Transverse colon (tissue), 4 donors: ENCODE measurements at regions of chrX and their contacts with region 1.

Region 1: DNA sequence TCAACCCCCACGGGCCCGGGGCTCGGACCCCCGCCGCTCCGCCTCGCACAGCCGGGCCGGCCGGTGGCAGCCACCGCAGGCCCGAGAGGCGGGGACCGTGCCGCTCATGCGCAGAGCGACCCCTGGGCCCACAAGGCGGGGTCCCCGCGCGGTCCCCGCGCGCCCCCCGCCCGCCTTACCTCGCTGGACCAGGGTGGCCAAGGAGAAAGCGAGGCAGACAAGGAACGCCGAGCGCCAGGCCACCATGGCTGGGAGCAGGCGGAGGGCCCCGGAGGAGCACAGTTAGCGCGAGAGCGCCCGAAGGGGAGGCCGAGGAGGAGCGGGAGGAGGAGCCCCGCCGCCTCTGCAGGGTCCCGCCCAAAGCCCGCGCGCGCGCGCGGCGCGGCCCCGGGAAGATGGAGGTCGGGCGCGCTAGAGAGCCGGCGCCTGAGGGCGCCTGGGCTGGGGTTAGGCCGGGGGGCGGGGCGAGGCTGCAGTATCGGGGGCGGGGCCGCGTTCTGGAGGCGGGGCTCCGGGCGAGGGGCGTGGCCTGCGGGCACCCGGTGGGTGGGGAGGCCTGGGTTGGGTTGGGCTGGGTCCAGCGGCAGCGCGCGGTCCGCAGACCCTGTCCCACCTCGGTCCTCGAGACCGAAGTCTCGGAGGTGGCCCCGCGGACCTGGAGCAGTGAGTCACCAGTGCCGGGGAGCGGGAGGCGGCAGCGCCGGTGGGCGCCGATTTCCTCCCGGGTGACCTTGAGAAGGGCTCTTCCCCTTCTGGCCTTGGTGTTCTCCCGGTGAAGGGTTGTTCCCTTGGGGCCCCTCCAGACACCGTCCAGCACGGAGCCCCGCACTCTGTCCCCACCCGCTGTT is at the start of gene CD99L2:
- DNase-seq: peak; percentile 93
- H3K4me3 ChIP-seq: peak within 1 kb of the TSS; percentile 53 to 77 (median 65)
- H3K27ac ChIP-seq: peak within 1 kb of the TSS; percentile 77 to 89 (median 84)
- H3K4me1 ChIP-seq: no peaks in the 10 kb centered on the region
- H3K27me3 ChIP-seq: no peaks in the 10 kb centered on the region
- CTCF ChIP-seq: no peak
- EP300 ChIP-seq: no peak
- POLR2A ChIP-seq: peak; percentile 67
- total RNA-seq, gene CD99L2: 12.3 to 22.4 (median 16.5) TPM

Region 2: GRCh38 chrX:150863191-150863590 is 35.4 kb before region 1 on chrX:
- in situ Hi-C with region 1: no loop called
- intact Hi-C with region 1: no loop called
- DNase-seq: no peak
- H3K4me3 ChIP-seq: no peak overlapping the region
- H3K27ac ChIP-seq: no peak overlapping the region
- H3K4me1 ChIP-seq: no peaks in the 10 kb centered on the region
- H3K27me3 ChIP-seq: no peaks in the 10 kb centered on the region
- CTCF ChIP-seq: no peak
- EP300 ChIP-seq: no peak
- POLR2A ChIP-seq: no peak

Region 3: GRCh38 chrX:150873616-150874015 is 25.0 kb before region 1 on chrX:
- in situ Hi-C with region 1: no loop called
- intact Hi-C with region 1: loop called (anchors 2 kb)
- DNase-seq: no peak
- H3K4me3 ChIP-seq: no peak overlapping the region
- H3K27ac ChIP-seq: no peak overlapping the region
- H3K4me1 ChIP-seq: peaks cover 0 to 6% (median 3%) of the 10 kb centered on the region in 4 donors
- H3K27me3 ChIP-seq: no peaks in the 10 kb centered on the region
- CTCF ChIP-seq: no peak
- EP300 ChIP-seq: no peak
- POLR2A ChIP-seq: no peak

Region 4: DNA sequence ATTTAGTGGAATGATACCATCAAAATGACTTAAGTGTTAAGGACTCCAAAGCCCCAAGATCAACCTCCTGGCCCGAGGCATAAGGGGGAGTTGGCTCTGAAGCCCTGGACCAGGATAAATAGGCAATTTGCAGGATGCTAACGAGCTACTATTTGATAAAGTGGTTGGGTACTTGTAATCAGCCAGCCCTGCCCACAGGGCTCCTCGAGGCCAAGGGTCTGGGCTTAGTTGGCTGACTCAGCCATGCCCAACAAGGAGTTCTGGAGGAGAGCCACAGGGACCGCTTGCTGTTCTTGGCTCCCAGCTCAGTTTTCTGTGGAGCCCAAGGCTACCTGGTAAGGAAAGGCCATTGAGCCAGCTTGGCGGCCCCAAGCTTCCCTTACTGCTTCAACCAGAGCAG is 92.3 kb after region 1 on chrX:
- in situ Hi-C with region 1: loop called in 1 of 4 experiments (anchors 5 kb)
- intact Hi-C with region 1: no loop called
- DNase-seq: no peak
- H3K4me3 ChIP-seq: no peak overlapping the region
- H3K27ac ChIP-seq: no peak overlapping the region
- H3K4me1 ChIP-seq: no peaks in the 10 kb centered on the region
- H3K27me3 ChIP-seq: no peaks in the 10 kb centered on the region
- CTCF ChIP-seq: no peak
- EP300 ChIP-seq: no peak
- POLR2A ChIP-seq: no peak

Region 5: DNA sequence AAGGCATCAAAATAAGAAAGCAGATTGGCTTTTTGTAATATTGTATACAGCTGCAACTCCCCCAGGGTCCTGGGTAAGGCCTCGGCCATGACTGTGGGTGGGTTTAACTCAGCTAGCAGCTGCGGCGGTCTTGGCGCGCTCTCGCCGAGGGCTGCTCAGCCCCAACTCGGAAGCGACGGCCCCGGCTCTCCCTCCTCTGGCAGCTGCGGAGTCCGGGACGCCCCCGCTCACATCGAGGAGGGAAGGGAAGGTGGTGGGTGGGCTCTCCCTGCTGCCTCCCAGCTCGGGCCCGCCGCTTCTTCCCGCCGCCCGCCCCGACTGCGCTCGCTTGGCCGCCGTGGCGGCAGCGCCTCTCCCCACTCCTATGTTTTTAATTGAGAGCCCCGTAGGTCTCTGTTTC is 329.1 kb after region 1 on chrX:
- in situ Hi-C with region 1: no loop called
- intact Hi-C with region 1: no loop called
- DNase-seq: no peak
- H3K4me3 ChIP-seq: no peak overlapping the region
- H3K27ac ChIP-seq: no peak overlapping the region
- H3K4me1 ChIP-seq: no peaks in the 10 kb centered on the region
- H3K27me3 ChIP-seq: no peaks in the 10 kb centered on the region
- CTCF ChIP-seq: no peak
- EP300 ChIP-seq: no peak
- POLR2A ChIP-seq: no peak

Region 6: DNA sequence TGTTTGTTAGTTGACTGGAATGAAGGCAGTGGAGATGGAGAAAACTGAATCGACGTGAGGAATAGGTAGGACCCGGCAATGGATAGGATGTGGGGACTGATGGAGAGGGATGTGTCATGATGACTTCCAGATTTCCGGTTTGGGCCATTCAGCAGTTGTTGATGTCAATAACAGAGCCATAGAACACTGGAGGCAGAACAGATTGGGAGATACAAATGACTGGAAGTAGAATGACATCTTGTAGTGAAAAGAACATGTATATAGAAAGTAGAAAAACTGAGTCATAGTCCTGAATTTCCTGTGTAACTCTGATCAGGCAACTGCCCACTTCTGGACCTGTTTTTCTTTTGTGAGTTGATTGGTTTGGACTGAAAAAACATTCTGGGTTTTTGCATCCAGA is 1907.5 kb after region 1 on chrX:
- in situ Hi-C with region 1: no loop called
- intact Hi-C with region 1: no loop called
- DNase-seq: no peak
- H3K4me3 ChIP-seq: no peak overlapping the region
- H3K27ac ChIP-seq: no peak overlapping the region
- H3K4me1 ChIP-seq: no peaks in the 10 kb centered on the region
- H3K27me3 ChIP-seq: no peaks in the 10 kb centered on the region
- CTCF ChIP-seq: no peak
- EP300 ChIP-seq: no peak
- POLR2A ChIP-seq: no peak